Activated CD8-positive, alpha-beta T cell treated with anti-CD3 and anti-CD28 coated beads for 36 hours (primary cell): ENCODE measurements at regions of chr12 and their contacts with region 1.

Region 1: GRCh38 chr12:2944401-2945047 is 14.7 kb upstream of the TEAD4 start:
- DNase-seq: peak; percentile 80
- ATAC-seq: peak; percentile 98
- H3K4me3 Mint-ChIP-seq: no peak overlapping the region
- H3K27ac Mint-ChIP-seq: no peak overlapping the region
- H3K4me1 Mint-ChIP-seq: no peaks in the 10 kb centered on the region
- H3K27me3 Mint-ChIP-seq: peaks cover 1% of the 10 kb centered on the region
- CTCF ChIP-seq: peak; percentile 83

Region 2: GRCh38 chr12:2845280-2845679 is 99.2 kb before region 1 on chr12:
- CTCF ChIA-PET with region 1: interaction called, 11 read pairs
- POLR2A ChIA-PET with region 1: no interaction called
- intact Hi-C with region 1: no loop called
- DNase-seq: no peak
- ATAC-seq: no peak
- H3K4me3 Mint-ChIP-seq: no peak overlapping the region
- H3K27ac Mint-ChIP-seq: no peak overlapping the region
- H3K4me1 Mint-ChIP-seq: no peaks in the 10 kb centered on the region
- H3K27me3 Mint-ChIP-seq: no peaks in the 10 kb centered on the region
- CTCF ChIP-seq: no peak

Region 3: DNA sequence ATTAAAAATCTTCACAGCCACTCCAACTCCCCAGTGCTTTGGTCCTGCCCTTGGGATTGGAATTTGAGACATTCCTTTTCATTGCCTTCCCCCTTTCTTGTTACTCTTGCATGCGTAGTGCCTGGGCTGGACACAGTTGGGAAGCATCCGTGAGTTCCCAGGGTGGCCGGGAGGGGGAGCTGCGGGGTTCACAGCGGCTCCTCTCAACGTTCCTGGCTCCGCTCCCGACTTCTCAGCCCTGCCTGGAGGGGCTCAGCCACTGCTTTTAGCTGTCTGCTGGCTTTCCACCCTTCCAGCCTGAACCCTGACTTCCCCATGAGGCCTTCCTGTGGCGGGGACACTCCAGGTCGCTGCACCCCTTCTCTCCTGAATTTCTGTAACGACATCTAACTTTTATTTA is 90.9 kb before region 1 on chr12:
- CTCF ChIA-PET with region 1: interaction called, 25 read pairs
- POLR2A ChIA-PET with region 1: no interaction called
- intact Hi-C with region 1: no loop called
- DNase-seq: peak; percentile 65
- ATAC-seq: peak; percentile 78
- H3K4me3 Mint-ChIP-seq: no peak overlapping the region
- H3K27ac Mint-ChIP-seq: no peak overlapping the region
- H3K4me1 Mint-ChIP-seq: no peaks in the 10 kb centered on the region
- H3K27me3 Mint-ChIP-seq: no peaks in the 10 kb centered on the region
- CTCF ChIP-seq: peak; percentile 67

Region 4: DNA sequence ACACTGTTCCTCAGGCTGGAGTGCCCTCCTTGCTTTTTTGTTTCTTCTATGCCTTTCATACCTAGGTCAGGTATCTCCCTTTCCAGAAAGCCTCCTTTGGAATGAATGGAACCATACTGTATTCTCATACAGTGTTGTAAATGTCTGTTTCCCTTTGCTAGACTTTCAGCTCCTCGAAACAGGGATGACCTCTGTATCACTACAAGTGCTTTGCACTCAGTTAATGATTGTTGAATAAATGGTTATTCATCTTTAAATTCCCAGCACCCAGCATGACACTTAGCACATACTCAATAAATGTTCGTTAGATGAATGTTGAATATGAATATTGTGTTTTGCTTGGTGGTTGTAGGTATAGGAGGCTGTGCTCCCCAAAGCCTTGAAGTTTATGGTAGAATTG is 59.7 kb before region 1 on chr12:
- CTCF ChIA-PET with region 1: interaction called, 22 read pairs
- POLR2A ChIA-PET with region 1: interaction called, 3 read pairs
- intact Hi-C with region 1: no loop called
- DNase-seq: no peak
- ATAC-seq: no peak
- H3K4me3 Mint-ChIP-seq: no peak overlapping the region
- H3K27ac Mint-ChIP-seq: peak overlapping the region; percentile 12
- H3K4me1 Mint-ChIP-seq: peaks cover 27% of the 10 kb centered on the region
- H3K27me3 Mint-ChIP-seq: no peaks in the 10 kb centered on the region
- CTCF ChIP-seq: no peak

Region 5: DNA sequence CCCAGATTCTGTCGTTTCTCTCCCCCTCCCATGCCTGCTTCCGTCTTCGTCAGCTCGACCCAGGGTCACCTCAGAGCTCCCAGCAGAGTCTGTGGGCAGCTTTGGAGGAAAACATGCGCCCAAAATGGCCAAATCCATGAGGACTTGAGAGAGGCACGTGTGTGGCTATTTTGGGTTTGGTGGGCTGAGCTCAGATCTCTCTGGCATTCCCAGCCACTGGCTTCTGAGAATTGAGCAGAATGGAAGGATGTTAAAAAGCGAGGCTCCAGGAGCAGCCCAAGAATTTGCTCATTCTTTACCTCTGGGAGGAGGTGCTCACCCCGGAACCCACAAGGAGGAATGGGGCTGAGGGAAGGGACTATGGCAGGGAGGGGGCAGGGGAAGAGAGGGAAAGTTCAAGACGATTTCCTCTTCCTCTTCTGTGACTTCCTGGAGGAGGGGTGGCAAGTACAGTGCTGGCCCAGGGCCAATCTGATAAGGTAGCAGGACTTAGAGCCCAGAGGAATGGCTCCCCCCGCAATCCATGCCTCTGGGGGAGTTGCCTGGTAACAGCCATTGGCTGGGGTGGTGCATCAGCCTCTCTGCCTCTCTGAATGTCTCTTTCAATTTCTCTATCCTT is 152.8 kb after region 1 on chr12:
- CTCF ChIA-PET with region 1: no interaction called
- POLR2A ChIA-PET with region 1: no interaction called
- intact Hi-C with region 1: no loop called
- DNase-seq: no peak
- ATAC-seq: no peak
- H3K4me3 Mint-ChIP-seq: no peak overlapping the region
- H3K27ac Mint-ChIP-seq: no peak overlapping the region
- H3K4me1 Mint-ChIP-seq: no peaks in the 10 kb centered on the region
- H3K27me3 Mint-ChIP-seq: no peaks in the 10 kb centered on the region
- CTCF ChIP-seq: no peak

Region 6: DNA sequence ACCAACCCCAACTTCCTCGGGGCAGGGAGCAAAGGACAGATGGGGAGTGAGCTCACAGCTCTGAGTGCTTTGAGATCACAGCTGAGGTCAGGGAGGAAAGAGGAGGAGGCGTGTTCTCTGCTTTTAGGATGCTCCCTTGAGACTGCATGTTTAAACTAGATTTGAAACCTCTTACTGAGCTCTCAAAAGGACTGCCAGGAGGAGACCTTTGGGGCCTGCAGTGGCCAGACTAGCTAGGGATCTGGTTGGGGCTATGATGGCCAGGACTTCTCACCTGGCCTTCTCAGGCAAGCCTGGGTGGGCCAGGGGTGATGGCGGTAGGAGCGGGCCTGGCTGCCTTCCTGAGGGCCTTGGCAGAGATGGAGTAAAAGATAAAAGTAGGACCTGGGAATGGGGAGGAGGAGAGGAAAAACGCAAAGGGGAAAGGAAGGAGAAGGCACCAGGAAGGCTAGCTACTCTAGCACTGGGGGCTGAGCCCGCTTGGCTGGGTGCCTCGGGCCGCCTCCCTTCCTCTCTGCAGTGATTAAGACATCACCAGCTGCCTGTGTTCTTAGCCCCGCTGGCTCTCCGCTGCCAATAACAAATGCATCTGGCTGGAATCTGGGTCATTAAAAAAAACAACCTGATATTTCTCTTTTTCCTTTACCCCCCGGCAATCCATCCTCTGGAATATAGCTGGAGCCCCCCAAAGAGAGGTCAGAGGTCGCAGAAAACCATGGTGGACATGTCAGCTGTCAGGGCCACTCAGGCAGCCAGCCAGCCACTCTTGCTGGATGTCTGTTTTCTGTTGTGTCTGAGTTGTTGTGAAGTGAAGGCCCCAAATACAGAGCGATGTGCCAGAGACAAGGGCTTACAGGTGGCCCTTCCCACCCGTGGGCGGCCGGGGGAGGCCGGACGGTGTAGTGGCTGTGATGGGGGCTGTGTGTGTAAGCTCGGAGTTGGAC is 274.0 kb after region 1 on chr12:
- CTCF ChIA-PET with region 1: no interaction called
- POLR2A ChIA-PET with region 1: no interaction called
- intact Hi-C with region 1: no loop called
- DNase-seq: no peak
- ATAC-seq: no peak
- H3K4me3 Mint-ChIP-seq: no peak overlapping the region
- H3K27ac Mint-ChIP-seq: no peak overlapping the region
- H3K4me1 Mint-ChIP-seq: no peaks in the 10 kb centered on the region
- H3K27me3 Mint-ChIP-seq: peaks cover 1% of the 10 kb centered on the region
- CTCF ChIP-seq: no peak